Panc1 (cell line): ENCODE measurements at regions of chr12 and their contacts with region 1.

Region 1: DNA sequence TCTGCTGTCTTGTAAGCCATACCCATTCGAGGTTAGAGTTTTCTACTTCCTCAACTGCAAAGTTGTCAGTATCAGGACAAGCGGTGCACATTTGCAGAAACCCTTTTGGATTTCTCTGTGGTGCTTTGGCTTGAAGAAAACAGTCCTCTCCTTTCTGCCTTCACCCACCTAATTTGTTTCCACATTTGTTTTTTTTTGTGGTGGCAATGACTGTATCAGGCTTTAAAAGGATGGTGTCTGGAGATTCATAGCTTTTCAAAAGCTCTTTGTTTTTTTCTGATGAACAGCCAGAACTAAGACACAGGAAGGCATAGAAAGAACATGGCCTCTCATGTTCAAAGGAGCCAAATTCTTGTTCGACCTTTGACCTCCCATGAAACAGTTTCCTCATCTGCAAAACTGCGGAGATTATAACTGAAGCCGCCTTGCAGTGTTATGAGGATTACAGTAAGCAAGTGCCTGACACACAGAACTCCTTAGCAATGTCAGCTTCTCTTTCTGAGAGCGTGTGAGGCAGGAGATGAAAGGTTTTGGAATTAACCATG is 270.6 kb upstream of the TBX3 start:
- DNase-seq: no peak
- ATAC-seq: no peak
- H3K4me3 ChIP-seq: no peak overlapping the region
- H3K27ac ChIP-seq: no peak overlapping the region
- H3K4me1 ChIP-seq: no peaks in the 10 kb centered on the region
- H3K27me3 ChIP-seq: no peaks in the 10 kb centered on the region
- CTCF ChIP-seq: no peak

Region 2: DNA sequence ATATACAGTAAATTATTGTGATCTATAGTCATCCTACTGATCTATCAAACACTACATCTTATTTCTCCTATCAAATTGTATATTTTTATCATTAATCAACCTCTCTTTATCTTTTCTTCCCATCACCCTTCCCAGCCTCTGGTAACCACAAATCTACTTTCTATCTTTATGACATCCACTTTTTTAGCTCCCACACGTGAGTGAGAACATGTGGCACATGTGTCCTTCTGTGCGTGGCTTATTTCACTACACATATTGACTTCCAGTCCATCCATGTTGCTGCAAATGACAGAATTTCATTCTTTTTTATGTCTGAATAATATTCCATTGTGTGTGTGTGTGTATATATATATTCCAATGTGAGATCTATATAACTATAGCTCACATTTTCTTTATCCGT is 480.9 kb before region 1 on chr12:
- CTCF ChIA-PET with region 1: no interaction called
- POLR2A ChIA-PET with region 1: no interaction called
- in situ Hi-C with region 1: no loop called
- intact Hi-C with region 1: no loop called
- DNase-seq: no peak
- ATAC-seq: no peak
- H3K4me3 ChIP-seq: no peak overlapping the region
- H3K27ac ChIP-seq: no peak overlapping the region
- H3K4me1 ChIP-seq: no peaks in the 10 kb centered on the region
- H3K27me3 ChIP-seq: peaks cover 25% of the 10 kb centered on the region
- CTCF ChIP-seq: no peak

Region 3: DNA sequence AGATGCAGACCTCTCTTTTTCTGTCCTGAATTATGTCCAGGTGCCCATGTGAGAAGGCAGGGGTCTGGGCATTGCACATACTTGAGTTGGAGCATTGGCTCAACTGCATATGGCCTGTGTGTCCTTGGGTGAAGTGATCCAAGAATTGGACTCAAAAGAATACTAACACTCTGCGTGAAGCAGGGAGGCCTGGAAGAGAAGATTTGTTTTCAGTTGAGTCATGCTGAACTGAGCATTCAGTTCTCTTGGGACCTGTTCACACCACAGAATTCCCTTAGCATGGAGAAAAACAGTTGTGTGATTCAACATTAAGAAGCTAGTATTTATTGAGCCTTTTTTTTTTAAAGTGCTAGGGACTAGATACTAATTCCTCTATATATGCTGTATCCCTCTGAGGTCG is 105.9 kb before region 1 on chr12:
- CTCF ChIA-PET with region 1: no interaction called
- POLR2A ChIA-PET with region 1: no interaction called
- in situ Hi-C with region 1: no loop called
- intact Hi-C with region 1: no loop called
- DNase-seq: no peak
- ATAC-seq: no peak
- H3K4me3 ChIP-seq: no peak overlapping the region
- H3K27ac ChIP-seq: no peak overlapping the region
- H3K4me1 ChIP-seq: no peaks in the 10 kb centered on the region
- H3K27me3 ChIP-seq: no peaks in the 10 kb centered on the region; the same call in 1 of the 2 replicates
- CTCF ChIP-seq: no peak

Region 4: GRCh38 chr12:114888448-114888847 is 66.1 kb before region 1 on chr12:
- CTCF ChIA-PET with region 1: no interaction called
- POLR2A ChIA-PET with region 1: interaction called, 10 read pairs
- in situ Hi-C with region 1: no loop called
- intact Hi-C with region 1: no loop called
- DNase-seq: no peak
- ATAC-seq: no peak
- H3K4me3 ChIP-seq: no peak overlapping the region
- H3K27ac ChIP-seq: no peak overlapping the region
- H3K4me1 ChIP-seq: no peaks in the 10 kb centered on the region
- H3K27me3 ChIP-seq: no peaks in the 10 kb centered on the region
- CTCF ChIP-seq: no peak

Region 5: GRCh38 chr12:115012861-115013235 is 58.3 kb after region 1 on chr12:
- CTCF ChIA-PET with region 1: no interaction called
- POLR2A ChIA-PET with region 1: no interaction called
- in situ Hi-C with region 1: no loop called
- intact Hi-C with region 1: no loop called
- DNase-seq: no peak
- ATAC-seq: no peak
- H3K4me3 ChIP-seq: no peak overlapping the region
- H3K27ac ChIP-seq: no peak overlapping the region
- H3K4me1 ChIP-seq: no peaks in the 10 kb centered on the region
- H3K27me3 ChIP-seq: no peaks in the 10 kb centered on the region; the same call in 1 of the 2 replicates
- CTCF ChIP-seq: no peak